Activated T-helper 1 cell treated with anti-CD3 and anti-CD28 coated beads, Interleukin-12 subunit alpha, Interleukin-12 subunit beta, Interleukin-2, Interleukin-4 antibody, amounts not matched to agents 30 ng/mL and 10 ng/mL and 1 ng/mL, durations not matched to agents 14 hours and 24 hours and 36 hours (primary cell): ENCODE measurements at regions of chr2 and their contacts with region 1.

Region 1: GRCh38 chr2:8303322-8303832 is 378.5 kb upstream of the ID2 start:
- DNase-seq: peak; percentile 77
- H3K4me3 Mint-ChIP-seq: peak overlapping the region; percentile 65
- H3K27ac Mint-ChIP-seq: peak overlapping the region; percentile 85
- H3K4me1 Mint-ChIP-seq: peaks cover 91% of the 10 kb centered on the region
- H3K27me3 Mint-ChIP-seq: peaks cover 7% of the 10 kb centered on the region

Region 2: GRCh38 chr2:7203055-7203467 is 1100.3 kb before region 1 on chr2:
- intact Hi-C with region 1: loop called (anchors 10 kb)
- DNase-seq: peak; percentile 27
- H3K4me3 Mint-ChIP-seq: no peak overlapping the region
- H3K27ac Mint-ChIP-seq: no peak overlapping the region
- H3K4me1 Mint-ChIP-seq: peaks cover 4% of the 10 kb centered on the region
- H3K27me3 Mint-ChIP-seq: peaks cover 4% of the 10 kb centered on the region

Region 3: DNA sequence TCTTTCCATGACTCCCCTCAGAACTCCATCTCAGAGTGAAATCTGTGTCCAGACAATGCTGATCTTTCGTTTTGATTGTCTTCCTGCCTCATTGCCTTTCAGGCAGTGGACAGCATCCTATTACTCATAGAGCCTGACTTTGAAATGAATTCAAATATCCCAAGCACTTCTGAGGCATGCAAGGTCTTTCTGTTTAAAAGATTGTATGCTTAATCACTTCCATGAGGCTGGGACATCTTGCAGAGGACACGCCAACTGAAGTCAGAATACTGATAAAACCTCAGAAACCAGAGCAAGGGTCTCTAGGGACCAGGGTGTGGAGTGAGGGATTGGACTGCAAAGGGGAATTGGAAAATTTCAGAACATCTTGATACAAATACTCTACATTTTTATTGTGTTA is 458.0 kb before region 1 on chr2:
- intact Hi-C with region 1: loop called (anchors 5 kb)
- DNase-seq: no peak
- H3K4me3 Mint-ChIP-seq: no peak overlapping the region
- H3K27ac Mint-ChIP-seq: no peak overlapping the region
- H3K4me1 Mint-ChIP-seq: peaks cover 57% of the 10 kb centered on the region
- H3K27me3 Mint-ChIP-seq: no peaks in the 10 kb centered on the region

Region 4: GRCh38 chr2:8252997-8253694 is 50.2 kb before region 1 on chr2:
- intact Hi-C with region 1: loop called (anchors 2 kb)
- DNase-seq: no peak
- H3K4me3 Mint-ChIP-seq: no peak overlapping the region
- H3K27ac Mint-ChIP-seq: no peak overlapping the region
- H3K4me1 Mint-ChIP-seq: peaks cover 30% of the 10 kb centered on the region
- H3K27me3 Mint-ChIP-seq: peaks cover 15% of the 10 kb centered on the region

Region 5: GRCh38 chr2:8378016-8378810 is 74.8 kb after region 1 on chr2:
- intact Hi-C with region 1: loop called (anchors 2 kb)
- DNase-seq: no peak
- H3K4me3 Mint-ChIP-seq: no peak overlapping the region
- H3K27ac Mint-ChIP-seq: peak overlapping the region; percentile 15
- H3K4me1 Mint-ChIP-seq: peaks cover 21% of the 10 kb centered on the region
- H3K27me3 Mint-ChIP-seq: peaks cover 5% of the 10 kb centered on the region